ENCODE measurements at regions of chr2 and their contacts with region 1.

Region 1: GRCh38 chr2:207473049-207473930 is 56.5 kb upstream of the CREB1 start:
- DNase-seq: peak; percentile 71
- H3K4me3 Mint-ChIP-seq: no peak overlapping the region
- H3K27ac Mint-ChIP-seq: peak overlapping the region; percentile 32
- H3K4me1 Mint-ChIP-seq: peaks cover 22% of the 10 kb centered on the region
- H3K27me3 Mint-ChIP-seq: no peaks in the 10 kb centered on the region

Region 2: DNA sequence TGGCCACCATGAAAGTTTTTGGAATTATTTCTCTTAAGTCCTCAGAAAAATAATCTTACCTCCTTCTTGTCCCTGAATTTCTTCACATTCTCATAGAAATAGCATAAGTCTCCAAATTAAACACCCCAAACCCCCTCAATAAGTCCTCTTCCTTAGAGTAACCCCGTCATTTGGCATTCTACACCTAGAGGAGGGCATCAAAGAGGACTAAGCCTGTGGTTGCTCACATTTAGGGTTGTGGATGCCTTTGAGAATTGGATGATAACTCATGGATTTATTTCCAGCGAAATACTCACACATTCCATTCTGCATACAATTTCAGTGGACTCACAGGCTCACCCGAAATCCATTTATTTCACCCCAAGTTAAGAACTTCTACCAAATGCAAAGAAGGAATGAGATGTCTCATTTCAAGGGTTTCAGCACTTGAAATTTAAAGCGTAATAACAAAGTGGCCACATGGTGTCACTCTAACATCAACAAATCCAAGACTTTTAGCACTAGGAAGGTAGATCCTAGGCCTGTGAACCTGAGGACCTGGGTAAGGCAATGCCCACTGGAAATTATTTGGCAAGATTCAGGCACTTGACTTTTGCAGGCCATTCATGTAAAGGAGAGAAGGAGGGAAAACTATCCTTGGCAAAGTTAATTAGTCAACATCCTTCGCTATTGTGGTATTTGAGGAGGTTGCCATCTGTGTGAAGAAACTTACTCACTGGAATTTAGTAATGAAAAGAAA is 779.7 kb before region 1 on chr2:
- CTCF ChIA-PET with region 1: interaction called, 4 read pairs
- POLR2A ChIA-PET with region 1: no interaction called
- intact Hi-C with region 1: loop called (anchors 1 kb)
- DNase-seq: no peak
- H3K4me3 Mint-ChIP-seq: no peak overlapping the region
- H3K27ac Mint-ChIP-seq: no peak overlapping the region
- H3K4me1 Mint-ChIP-seq: peaks cover 3% of the 10 kb centered on the region
- H3K27me3 Mint-ChIP-seq: no peaks in the 10 kb centered on the region

Region 3: GRCh38 chr2:206981739-206982340 is 491.4 kb before region 1 on chr2:
- CTCF ChIA-PET with region 1: interaction called, 7 read pairs
- POLR2A ChIA-PET with region 1: no interaction called
- intact Hi-C with region 1: loop called (anchors 1 kb)
- DNase-seq: peak; percentile 70
- H3K4me3 Mint-ChIP-seq: no peak overlapping the region
- H3K27ac Mint-ChIP-seq: no peak overlapping the region
- H3K4me1 Mint-ChIP-seq: peaks cover 5% of the 10 kb centered on the region
- H3K27me3 Mint-ChIP-seq: no peaks in the 10 kb centered on the region

Region 4: GRCh38 chr2:207046724-207047123 is 426.6 kb before region 1 on chr2:
- CTCF ChIA-PET with region 1: interaction called, 15 read pairs
- POLR2A ChIA-PET with region 1: no interaction called
- intact Hi-C with region 1: loop called (anchors 1 kb)
- DNase-seq: peak; percentile 41
- H3K4me3 Mint-ChIP-seq: no peak overlapping the region
- H3K27ac Mint-ChIP-seq: peak overlapping the region; percentile 1
- H3K4me1 Mint-ChIP-seq: peaks cover 12% of the 10 kb centered on the region
- H3K27me3 Mint-ChIP-seq: no peaks in the 10 kb centered on the region

Region 5: GRCh38 chr2:207143215-207144172 is 329.8 kb before region 1 on chr2:
- CTCF ChIA-PET with region 1: interaction called, 16 read pairs
- POLR2A ChIA-PET with region 1: interaction called, 6 read pairs
- intact Hi-C with region 1: loop called (anchors 1 kb)
- DNase-seq: peak; percentile 56
- H3K4me3 Mint-ChIP-seq: peak overlapping the region; percentile 48
- H3K27ac Mint-ChIP-seq: peak overlapping the region; percentile 79
- H3K4me1 Mint-ChIP-seq: peaks cover 71% of the 10 kb centered on the region
- H3K27me3 Mint-ChIP-seq: no peaks in the 10 kb centered on the region

Region 6: DNA sequence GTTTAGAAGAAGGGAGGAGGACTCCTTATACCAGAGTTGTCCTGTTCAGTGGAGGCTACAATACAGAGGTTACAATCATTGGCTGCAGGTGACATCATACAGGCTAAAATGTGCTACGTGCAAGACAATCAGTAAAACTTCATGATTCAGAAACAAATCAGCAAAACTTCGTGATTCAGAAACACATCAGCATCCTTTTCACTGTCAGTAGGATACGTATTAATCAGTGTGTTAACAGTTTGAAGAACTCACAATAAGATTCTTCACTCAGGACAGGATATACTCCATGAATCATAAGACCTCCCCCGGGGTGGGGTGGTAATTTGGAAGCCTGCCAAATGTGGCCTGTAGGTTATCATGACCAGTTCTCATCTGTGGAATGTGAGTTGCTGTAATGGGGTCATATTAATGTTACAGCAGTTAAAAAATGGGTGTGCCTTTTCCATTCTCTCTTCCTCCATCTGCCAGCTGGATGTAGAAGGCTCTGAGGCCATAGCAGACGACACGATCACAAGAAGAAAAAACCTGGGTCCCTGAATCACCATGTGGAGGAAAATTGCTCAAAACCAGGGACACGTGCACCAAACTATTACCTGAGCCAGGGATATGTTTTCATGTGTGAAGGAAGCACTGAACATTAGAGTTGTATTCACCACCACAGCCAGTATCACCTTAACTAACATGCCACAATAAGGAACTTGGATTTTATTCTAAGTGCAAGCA is 78.3 kb before region 1 on chr2:
- CTCF ChIA-PET with region 1: no interaction called
- POLR2A ChIA-PET with region 1: no interaction called
- intact Hi-C with region 1: loop called (anchors 2 kb)
- DNase-seq: peak; percentile 86
- H3K4me3 Mint-ChIP-seq: no peak overlapping the region
- H3K27ac Mint-ChIP-seq: peak overlapping the region; percentile 85
- H3K4me1 Mint-ChIP-seq: peaks cover 17% of the 10 kb centered on the region
- H3K27me3 Mint-ChIP-seq: peaks cover 1% of the 10 kb centered on the region

Region 7: DNA sequence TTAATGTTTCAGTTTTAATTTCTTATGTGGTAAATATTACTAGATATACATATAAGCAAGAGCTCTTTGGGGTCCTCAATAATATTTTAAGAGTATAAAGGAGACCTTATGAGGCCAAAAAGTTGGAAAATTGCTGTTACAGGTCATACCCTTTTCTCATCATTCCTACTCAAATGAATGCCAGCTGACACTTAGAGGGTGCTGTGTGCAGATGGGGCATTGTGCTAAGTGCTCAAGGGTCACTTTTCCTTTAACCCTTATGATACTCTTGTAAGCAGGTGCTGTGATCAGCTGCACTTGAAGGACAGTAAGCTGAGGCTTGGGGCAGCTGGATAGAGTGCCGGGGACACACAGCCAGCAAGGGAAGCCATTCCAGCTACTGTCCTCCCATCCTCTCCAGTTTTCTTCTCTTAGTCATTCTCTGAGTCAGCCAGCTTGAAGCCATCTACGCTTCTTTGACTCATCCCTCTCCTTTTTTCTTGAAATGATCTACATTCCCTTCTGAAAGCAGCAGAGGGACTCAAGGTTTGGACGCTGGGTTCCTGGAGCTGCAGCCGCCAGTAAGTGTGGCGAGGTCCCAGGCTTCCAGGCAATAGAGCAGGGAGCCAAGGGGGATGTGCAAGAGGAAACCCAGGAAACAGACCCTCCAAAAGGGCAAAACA is 14.5 kb after region 1 on chr2:
- CTCF ChIA-PET with region 1: no interaction called
- POLR2A ChIA-PET with region 1: no interaction called
- intact Hi-C with region 1: no loop called
- DNase-seq: no peak
- H3K4me3 Mint-ChIP-seq: no peak overlapping the region
- H3K27ac Mint-ChIP-seq: no peak overlapping the region
- H3K4me1 Mint-ChIP-seq: no peaks in the 10 kb centered on the region
- H3K27me3 Mint-ChIP-seq: no peaks in the 10 kb centered on the region

Region 8: DNA sequence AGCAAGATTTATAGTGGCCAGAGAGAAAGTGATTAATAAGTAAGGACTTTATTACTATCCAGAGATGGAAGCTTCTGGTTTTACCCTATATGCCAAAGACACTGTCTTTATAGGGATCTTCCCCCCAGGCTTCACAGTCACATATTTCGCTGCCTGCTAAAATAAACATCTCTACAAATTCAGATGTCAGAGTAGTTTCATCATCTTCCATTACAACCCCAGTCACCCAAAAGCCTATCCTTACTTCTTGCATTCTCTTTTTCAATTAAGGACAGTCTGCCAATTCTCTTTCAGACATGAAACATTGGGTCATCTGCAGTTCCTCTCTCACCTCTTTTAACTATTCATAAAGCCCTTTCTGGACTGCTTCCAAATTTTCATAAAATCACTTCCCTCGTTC is 84.8 kb after region 1 on chr2:
- CTCF ChIA-PET with region 1: no interaction called
- POLR2A ChIA-PET with region 1: no interaction called
- intact Hi-C with region 1: no loop called
- DNase-seq: no peak
- H3K4me3 Mint-ChIP-seq: no peak overlapping the region
- H3K27ac Mint-ChIP-seq: peak overlapping the region; percentile 43
- H3K4me1 Mint-ChIP-seq: peaks cover 19% of the 10 kb centered on the region
- H3K27me3 Mint-ChIP-seq: no peaks in the 10 kb centered on the region

Measured in activated CD4-positive, alpha-beta memory T cell treated with anti-CD3 and anti-CD28 coated beads for 36 hours (primary cell).